Ovary (tissue), 10 donors: ENCODE measurements at regions of chr11 and their contacts with region 1.

Region 1: GRCh38 chr11:117713538-117713991 is 83.5 kb downstream of the DSCAML1 start:
- DNase-seq: no peak
- H3K4me3 ChIP-seq: no peak overlapping the region
- H3K27ac ChIP-seq: no peak overlapping the region
- H3K4me1 ChIP-seq: no peaks in the 10 kb centered on the region
- H3K27me3 ChIP-seq: no peaks in the 10 kb centered on the region
- CTCF ChIP-seq: no peak
- EP300 ChIP-seq: no peak
- POLR2A ChIP-seq: no peak

Region 2: GRCh38 chr11:117458275-117458674 is 255.3 kb before region 1 on chr11:
- intact Hi-C with region 1: loop called in 1 of 4 experiments (anchors 5 kb)
- DNase-seq: no peak
- H3K4me3 ChIP-seq: no peak overlapping the region
- H3K27ac ChIP-seq: no peak overlapping the region
- H3K4me1 ChIP-seq: no peaks in the 10 kb centered on the region
- H3K27me3 ChIP-seq: no peaks in the 10 kb centered on the region
- CTCF ChIP-seq: no peak
- EP300 ChIP-seq: no peak
- POLR2A ChIP-seq: no peak

Region 3: GRCh38 chr11:117945047-117945810 is 231.7 kb after region 1 on chr11:
- intact Hi-C with region 1: no loop called
- DNase-seq: no peak
- H3K4me3 ChIP-seq: no peak overlapping the region
- H3K27ac ChIP-seq: no peak overlapping the region
- H3K4me1 ChIP-seq: peaks cover 2% of the 10 kb centered on the region
- H3K27me3 ChIP-seq: no peaks in the 10 kb centered on the region
- CTCF ChIP-seq: no peak
- EP300 ChIP-seq: no peak
- POLR2A ChIP-seq: no peak